IMR-90 (cell line): ENCODE measurements at regions of chr15 and their contacts with region 1.

Region 1: DNA sequence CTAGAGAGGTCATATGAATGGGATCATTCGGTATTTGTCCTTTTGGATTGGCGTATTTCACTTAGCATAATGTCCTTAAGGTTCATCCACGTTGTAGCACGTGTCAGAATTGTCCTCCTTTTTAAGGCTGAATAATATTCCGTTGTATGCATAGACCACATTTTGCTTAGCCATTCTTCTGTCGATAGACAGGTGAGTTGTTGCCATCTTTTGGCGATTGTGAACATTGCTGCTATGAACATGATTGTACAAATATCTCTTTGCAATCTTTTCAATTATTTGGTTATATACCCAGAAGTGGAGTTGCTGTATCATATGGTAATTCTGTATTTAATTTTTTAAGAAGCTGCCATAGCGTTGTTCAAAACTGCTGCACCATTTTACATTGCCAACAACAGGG is 52.4 kb upstream of the GOLGA8J start:
- DNase-seq: no peak
- ATAC-seq: no peak
- H3K4me3 ChIP-seq: no peak overlapping the region
- H3K27ac ChIP-seq: no peak overlapping the region
- H3K4me1 ChIP-seq: no peaks in the 10 kb centered on the region
- H3K27me3 ChIP-seq: peaks cover 10% of the 10 kb centered on the region
- CTCF ChIP-seq: 0 out of 2 replicates have a peak, but pooled peaks have one; percentile 13
- POLR2A ChIP-seq: no peak
- RAD21 ChIP-seq: peak; percentile 21; the same call in 1 of the 2 replicates

Region 2: DNA sequence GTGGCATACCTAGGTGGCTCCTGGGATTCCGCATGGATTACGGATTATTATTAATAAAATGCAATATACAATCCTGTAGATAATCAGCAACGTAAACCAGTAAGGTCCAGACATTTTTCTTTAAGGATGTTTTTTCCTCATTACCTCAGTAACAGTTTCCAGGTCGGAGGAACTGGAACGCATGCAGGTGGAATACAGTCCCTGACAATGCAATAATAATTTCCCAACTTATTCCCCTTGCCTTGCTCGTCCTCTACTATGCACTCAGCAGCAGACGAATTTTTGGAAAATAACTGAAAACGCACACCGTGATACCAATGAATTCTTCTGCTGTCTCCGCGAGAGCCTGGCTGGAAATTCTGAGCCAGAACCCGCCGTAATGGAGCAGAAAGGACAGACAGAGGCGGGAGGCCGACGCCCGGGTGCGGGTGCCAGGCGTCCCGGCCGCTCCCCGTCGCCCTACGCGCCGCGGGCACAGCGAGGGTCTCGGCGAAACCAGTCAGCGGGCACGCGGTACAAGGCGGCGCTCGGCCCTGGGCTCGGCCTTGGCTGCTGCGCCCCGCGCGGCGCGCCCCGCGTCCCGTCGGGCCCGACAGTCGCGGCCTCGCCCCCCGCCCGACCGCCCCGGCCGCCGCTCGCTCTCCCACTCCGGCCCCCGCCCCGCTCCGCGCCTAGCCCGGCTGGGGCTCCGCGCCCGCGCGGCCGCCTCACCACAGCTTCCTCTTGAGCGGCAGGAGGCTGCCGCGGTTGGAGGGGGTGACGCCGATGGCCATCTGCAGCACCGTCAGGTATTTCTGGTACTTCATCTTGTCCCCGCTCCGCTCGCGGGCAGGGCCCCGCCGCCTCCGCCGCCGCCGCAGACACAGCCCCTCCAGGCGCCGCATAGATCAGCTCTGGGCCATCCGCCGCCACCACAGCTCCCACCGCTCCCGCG is 62.1 kb before region 1 on chr15:
- CTCF ChIA-PET with region 1: no interaction called
- POLR2A ChIA-PET with region 1: no interaction called
- dilution Hi-C with region 1: no loop called
- in situ Hi-C with region 1: no loop called
- intact Hi-C with region 1: no loop called
- DNase-seq: no peak
- ATAC-seq: peak; percentile 75
- H3K4me3 ChIP-seq: peak overlapping the region; percentile 21; the same call in 1 of the 2 replicates
- H3K27ac ChIP-seq: no peak overlapping the region
- H3K4me1 ChIP-seq: no peaks in the 10 kb centered on the region
- H3K27me3 ChIP-seq: peaks cover 58% of the 10 kb centered on the region
- CTCF ChIP-seq: no peak
- POLR2A ChIP-seq: no peak
- RAD21 ChIP-seq: no peak

Region 3: GRCh38 chr15:29998033-29998432 is 32.3 kb before region 1 on chr15:
- CTCF ChIA-PET with region 1: no interaction called
- POLR2A ChIA-PET with region 1: no interaction called
- dilution Hi-C with region 1: no loop called
- in situ Hi-C with region 1: no loop called
- intact Hi-C with region 1: loop called (anchors 5 kb)
- DNase-seq: no peak
- ATAC-seq: no peak
- H3K4me3 ChIP-seq: no peak overlapping the region
- H3K27ac ChIP-seq: no peak overlapping the region
- H3K4me1 ChIP-seq: no peaks in the 10 kb centered on the region
- H3K27me3 ChIP-seq: peaks cover 4% of the 10 kb centered on the region
- CTCF ChIP-seq: no peak
- POLR2A ChIP-seq: no peak
- RAD21 ChIP-seq: no peak

Region 4: GRCh38 chr15:30043211-30043655 is 12.9 kb after region 1 on chr15:
- CTCF ChIA-PET with region 1: no interaction called
- POLR2A ChIA-PET with region 1: no interaction called
- dilution Hi-C with region 1: no loop called
- in situ Hi-C with region 1: no loop called
- intact Hi-C with region 1: no loop called
- DNase-seq: peak; percentile 29
- ATAC-seq: peak; percentile 83
- H3K4me3 ChIP-seq: no peak overlapping the region
- H3K27ac ChIP-seq: no peak overlapping the region
- H3K4me1 ChIP-seq: no peaks in the 10 kb centered on the region
- H3K27me3 ChIP-seq: peaks cover 7% of the 10 kb centered on the region
- CTCF ChIP-seq: peak; percentile 50
- POLR2A ChIP-seq: no peak
- RAD21 ChIP-seq: peak; percentile 44

Region 5: GRCh38 chr15:30062881-30063280 is 32.5 kb after region 1 on chr15:
- CTCF ChIA-PET with region 1: no interaction called
- POLR2A ChIA-PET with region 1: no interaction called
- dilution Hi-C with region 1: no loop called
- in situ Hi-C with region 1: no loop called
- intact Hi-C with region 1: no loop called
- DNase-seq: no peak
- ATAC-seq: no peak
- H3K4me3 ChIP-seq: no peak overlapping the region
- H3K27ac ChIP-seq: no peak overlapping the region
- H3K4me1 ChIP-seq: peaks cover 1% of the 10 kb centered on the region; the same call in 1 of the 2 replicates
- H3K27me3 ChIP-seq: peaks cover 5% of the 10 kb centered on the region
- CTCF ChIP-seq: no peak
- POLR2A ChIP-seq: no peak
- RAD21 ChIP-seq: no peak